Aorta (tissue), 5 donors: ENCODE measurements at regions of chr18 and their contacts with region 1.

Region 1: DNA sequence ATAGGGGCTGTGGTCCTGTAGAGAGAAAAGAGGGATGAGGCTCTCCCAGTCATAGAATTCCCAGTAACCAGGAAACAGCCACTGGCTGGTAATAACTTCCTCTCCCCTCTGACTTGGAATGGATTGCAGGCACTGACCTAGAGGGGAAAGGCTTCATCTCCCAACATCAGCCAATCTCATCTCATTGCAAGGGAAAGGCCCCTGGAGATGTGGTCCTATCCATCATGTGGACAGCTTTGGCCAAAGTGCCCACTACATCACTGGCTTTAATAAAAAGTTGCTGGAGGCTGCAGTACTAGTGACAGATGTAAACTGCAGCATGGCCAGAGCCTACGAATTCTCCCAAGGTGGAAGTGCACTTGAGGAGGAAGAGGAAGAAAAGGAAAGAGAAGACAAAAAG is 820.5 kb upstream of the CELF4 start:
- DNase-seq: no peak
- ATAC-seq: no peak
- H3K4me3 ChIP-seq: no peak overlapping the region
- H3K27ac ChIP-seq: no peak overlapping the region
- H3K4me1 ChIP-seq: no peaks in the 10 kb centered on the region
- H3K27me3 ChIP-seq: peaks cover 0 to 2% of the 10 kb centered on the region in 2 donors

Region 2: DNA sequence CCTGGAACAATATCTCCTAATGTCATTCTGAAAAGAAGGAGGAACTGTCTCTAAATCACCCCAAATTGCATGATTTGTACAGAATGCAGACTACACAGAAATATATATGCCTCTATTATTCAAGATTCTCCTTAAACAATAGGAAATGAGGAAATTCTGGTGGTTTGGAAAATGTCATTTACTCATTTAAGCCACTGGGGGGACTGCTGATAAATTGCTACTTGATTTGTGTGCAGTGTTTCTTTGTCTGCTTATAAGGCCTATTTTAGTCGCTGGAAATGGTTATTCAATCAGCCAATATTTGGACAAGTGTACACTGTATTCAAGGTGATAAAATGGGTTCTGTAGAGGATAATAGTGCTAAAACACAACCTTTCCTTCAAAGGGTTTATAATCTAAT is 18.7 kb before region 1 on chr18:
- intact Hi-C with region 1: no loop called
- DNase-seq: no peak
- ATAC-seq: no peak
- H3K4me3 ChIP-seq: no peak overlapping the region
- H3K27ac ChIP-seq: no peak overlapping the region
- H3K4me1 ChIP-seq: no peaks in the 10 kb centered on the region
- H3K27me3 ChIP-seq: no peaks in the 10 kb centered on the region

Region 3: DNA sequence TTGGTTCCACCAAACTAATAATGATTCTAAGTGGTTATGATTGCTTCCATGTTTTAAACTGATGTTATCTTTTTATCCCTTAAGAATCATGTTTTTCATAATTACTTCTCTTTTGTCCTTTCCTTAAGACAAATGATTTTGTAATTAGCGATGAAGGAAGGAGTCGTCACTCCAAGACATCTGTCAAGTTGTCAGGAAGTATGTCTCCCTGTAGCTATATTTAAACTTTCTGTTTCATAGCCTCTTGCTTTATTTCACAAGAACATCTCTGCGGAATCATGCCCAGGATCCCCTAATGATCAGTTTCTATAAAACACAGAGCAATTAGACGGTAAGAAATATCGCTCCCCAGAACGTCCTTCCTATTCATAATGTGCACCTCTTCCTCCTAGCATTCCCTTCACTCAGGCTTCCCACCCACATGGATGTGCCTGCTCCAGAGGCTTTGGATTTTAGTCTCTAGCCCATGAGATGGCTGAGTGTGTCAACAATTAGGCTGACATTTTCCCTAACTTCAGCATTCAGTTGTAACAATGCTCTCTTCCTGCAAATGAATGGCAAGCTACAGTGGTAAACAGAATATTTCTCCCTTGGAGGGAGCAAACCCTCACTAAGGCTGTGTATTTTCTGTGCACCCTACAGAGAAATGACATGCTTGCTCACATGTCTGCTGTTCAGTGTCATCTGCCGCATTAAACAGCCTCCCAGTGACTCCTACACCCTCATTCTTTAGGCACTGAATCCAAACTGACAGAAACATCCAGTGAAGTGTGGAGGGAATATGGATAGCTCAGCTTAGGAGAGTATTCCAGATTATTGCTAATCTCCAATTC is 59.0 kb after region 1 on chr18:
- intact Hi-C with region 1: loop called in 1 of 2 experiments (anchors 10 kb)
- DNase-seq: no peak
- ATAC-seq: no peak
- H3K4me3 ChIP-seq: no peak overlapping the region
- H3K27ac ChIP-seq: no peak overlapping the region
- H3K4me1 ChIP-seq: no peaks in the 10 kb centered on the region
- H3K27me3 ChIP-seq: no peaks in the 10 kb centered on the region